ENCODE measurements at regions of chr13 and their contacts with region 1.

Region 1: GRCh38 chr13:27638521-27638920 is 16.8 kb downstream of the POLR1D start:
- DNase-seq: no peak
- ATAC-seq: peak in 3 of 8 donors; percentile 38 to 75 (median 71)
- H3K4me3 ChIP-seq: peak overlapping the region in 1 of 10 donors; percentile 2
- H3K27ac ChIP-seq: peak overlapping the region in 7 of 10 donors; percentile 4 to 67 (median 45)
- H3K4me1 ChIP-seq: peaks cover 0 to 54% (median 34%) of the 10 kb centered on the region in 9 donors
- H3K27me3 ChIP-seq: no peaks in the 10 kb centered on the region
- CTCF ChIP-seq: no peak

Region 2: DNA sequence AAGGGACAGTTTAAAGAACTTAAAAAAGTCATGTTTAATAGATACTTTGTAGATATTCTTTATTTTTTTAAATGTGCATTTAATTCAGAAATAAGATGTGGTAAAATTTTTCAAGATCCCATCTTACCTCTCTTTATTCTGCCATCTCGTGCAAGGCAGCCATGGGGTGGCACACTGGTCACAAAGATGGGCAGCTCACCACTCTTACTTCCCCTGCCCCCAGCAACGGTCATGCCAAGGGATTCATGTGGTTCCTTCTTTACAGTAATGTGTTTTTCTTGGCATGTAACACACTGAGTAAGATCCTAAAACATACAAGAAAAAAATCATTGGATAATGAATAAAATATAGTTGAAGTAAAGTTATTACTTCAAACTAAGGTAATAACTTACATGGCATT is 82.4 kb before region 1 on chr13:
- intact Hi-C with region 1: loop called in 1 of 10 experiments (anchors 10 kb)
- DNase-seq: peak in 1 of 2 donors; percentile 12
- ATAC-seq: peak in 1 of 8 donors; percentile 49
- H3K4me3 ChIP-seq: no peak overlapping the region
- H3K27ac ChIP-seq: no peak overlapping the region
- H3K4me1 ChIP-seq: peaks cover 0 to 14% (median 3%) of the 10 kb centered on the region in 9 donors
- H3K27me3 ChIP-seq: no peaks in the 10 kb centered on the region
- CTCF ChIP-seq: peak in 6 of 9 donors; percentile 14 to 45 (median 34)

Measured in heart right ventricle (tissue), 16 donors.